ENCODE measurements at regions of chrX and their contacts with region 1.

Region 1: GRCh38 chrX:54639346-54640102 is 109.5 kb downstream of the GNL3L start:
- DNase-seq: peak; percentile 95
- H3K4me3 Mint-ChIP-seq: peak overlapping the region; percentile 90
- H3K27ac Mint-ChIP-seq: peak overlapping the region; percentile 99
- H3K4me1 Mint-ChIP-seq: peaks cover 5% of the 10 kb centered on the region
- H3K27me3 Mint-ChIP-seq: no peaks in the 10 kb centered on the region

Region 2: DNA sequence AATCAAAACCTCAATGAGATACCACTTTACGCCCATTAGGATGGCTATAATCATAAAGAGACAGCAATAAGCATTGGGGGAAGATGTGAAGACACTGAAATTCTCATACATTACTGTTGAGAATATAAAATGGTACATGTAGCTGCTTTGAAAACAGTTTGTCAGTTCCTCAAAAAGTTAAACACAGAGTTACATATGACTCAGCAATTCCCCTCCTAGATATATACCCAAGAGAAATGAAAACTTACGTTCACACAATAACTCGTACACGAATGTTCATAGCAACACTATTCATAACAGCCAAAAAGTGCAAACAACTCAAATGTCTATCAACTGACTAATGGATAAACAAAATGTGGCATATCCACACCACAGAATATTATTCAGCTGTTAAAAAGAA is 631.8 kb before region 1 on chrX:
- CTCF ChIA-PET with region 1: no interaction called
- POLR2A ChIA-PET with region 1: no interaction called
- intact Hi-C with region 1: no loop called
- DNase-seq: no peak
- H3K4me3 Mint-ChIP-seq: no peak overlapping the region
- H3K27ac Mint-ChIP-seq: no peak overlapping the region
- H3K4me1 Mint-ChIP-seq: peaks cover 4% of the 10 kb centered on the region
- H3K27me3 Mint-ChIP-seq: no peaks in the 10 kb centered on the region

Region 3: GRCh38 chrX:54439967-54440871 is 199.3 kb before region 1 on chrX and contains the start of gene TSR2:
- CTCF ChIA-PET with region 1: no interaction called
- POLR2A ChIA-PET with region 1: interaction called, 3 read pairs
- intact Hi-C with region 1: loop called (anchors 1 kb)
- DNase-seq: peak; percentile 88
- H3K4me3 Mint-ChIP-seq: peak within 1 kb of the TSS; percentile 90
- H3K27ac Mint-ChIP-seq: peak within 1 kb of the TSS; percentile 78
- H3K4me1 Mint-ChIP-seq: peaks cover 26% of the 10 kb centered on the region
- H3K27me3 Mint-ChIP-seq: no peaks in the 10 kb centered on the region
- total RNA-seq, gene TSR2: 24.1 to 25.4 TPM

Region 4: GRCh38 chrX:54786962-54787361 is 147.4 kb after region 1 on chrX:
- CTCF ChIA-PET with region 1: interaction called, 10 read pairs
- POLR2A ChIA-PET with region 1: no interaction called
- intact Hi-C with region 1: loop called (anchors 5 kb)
- DNase-seq: peak; percentile 55
- H3K4me3 Mint-ChIP-seq: no peak overlapping the region
- H3K27ac Mint-ChIP-seq: no peak overlapping the region
- H3K4me1 Mint-ChIP-seq: no peaks in the 10 kb centered on the region
- H3K27me3 Mint-ChIP-seq: no peaks in the 10 kb centered on the region

Region 5: GRCh38 chrX:54865208-54865607 is 225.7 kb after region 1 on chrX:
- CTCF ChIA-PET with region 1: no interaction called
- POLR2A ChIA-PET with region 1: no interaction called
- intact Hi-C with region 1: no loop called
- DNase-seq: no peak
- H3K4me3 Mint-ChIP-seq: no peak overlapping the region
- H3K27ac Mint-ChIP-seq: no peak overlapping the region
- H3K4me1 Mint-ChIP-seq: no peaks in the 10 kb centered on the region
- H3K27me3 Mint-ChIP-seq: no peaks in the 10 kb centered on the region

Region 6: DNA sequence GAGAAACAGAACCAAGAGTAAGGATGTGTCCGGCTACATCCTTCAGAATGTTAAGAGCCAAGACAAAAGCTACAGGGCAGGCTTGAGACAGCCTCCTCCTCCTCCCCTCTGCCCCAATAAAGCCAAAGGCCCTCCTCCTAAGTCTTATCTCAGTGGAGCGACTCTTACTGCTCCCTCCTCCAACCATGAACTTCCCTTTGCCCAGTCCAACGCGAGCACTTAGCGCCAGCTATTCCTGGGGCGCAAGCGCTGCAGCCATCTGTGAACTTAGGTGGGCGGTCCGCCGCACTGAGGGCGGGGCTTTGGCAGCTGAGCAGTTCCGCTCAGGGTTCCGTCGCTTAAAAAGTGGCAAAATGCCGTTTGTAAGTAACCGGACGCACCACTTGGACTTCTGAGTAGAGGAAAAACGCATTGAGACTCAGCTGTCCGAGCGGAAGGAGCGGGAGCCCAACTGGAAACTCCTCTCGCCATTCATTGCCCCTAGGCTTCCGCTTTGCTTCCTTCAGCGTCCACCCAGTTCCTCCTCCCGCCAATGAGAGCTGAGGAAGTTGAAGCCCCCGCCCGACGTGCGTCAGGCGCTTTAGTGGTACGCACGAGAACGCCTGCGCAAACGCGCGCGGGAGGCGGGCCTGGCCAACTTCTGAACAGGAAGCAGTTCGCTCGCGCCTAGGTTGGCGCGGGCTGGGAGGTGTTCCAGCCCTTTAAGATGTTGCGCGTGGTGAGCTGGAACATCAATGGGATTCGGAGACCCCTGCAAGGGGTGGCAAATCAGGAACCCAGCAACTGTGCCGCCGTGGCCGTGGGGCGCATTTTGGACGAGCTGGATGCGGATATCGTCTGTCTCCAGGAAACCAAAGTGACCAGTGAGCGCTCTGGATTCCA is 360.4 kb after region 1 on chrX and contains the start of gene APEX2:
- CTCF ChIA-PET with region 1: interaction called, 5 read pairs
- POLR2A ChIA-PET with region 1: interaction called, 7 read pairs
- intact Hi-C with region 1: loop called (anchors 5 kb)
- DNase-seq: peak; percentile 92
- H3K4me3 Mint-ChIP-seq: peak within 1 kb of the TSS; percentile 92
- H3K27ac Mint-ChIP-seq: peak within 1 kb of the TSS; percentile 87
- H3K4me1 Mint-ChIP-seq: peaks cover 17% of the 10 kb centered on the region
- H3K27me3 Mint-ChIP-seq: no peaks in the 10 kb centered on the region
- total RNA-seq, gene APEX2: 32.7 to 32.9 TPM

Measured in activated CD4-positive, alpha-beta memory T cell treated with anti-CD3 and anti-CD28 coated beads for 36 hours (primary cell).